MCF 10A (cell line): ENCODE measurements at regions of chr1 and their contacts with region 1.

Region 1: GRCh38 chr1:64923294-64923721 is 43.0 kb downstream of the JAK1 start:
- DNase-seq: no peak
- H3K4me3 Mint-ChIP-seq: no peak overlapping the region
- H3K27ac Mint-ChIP-seq: no peak overlapping the region
- H3K4me1 Mint-ChIP-seq: peaks cover 35% of the 10 kb centered on the region
- H3K27me3 Mint-ChIP-seq: no peaks in the 10 kb centered on the region
- CTCF ChIP-seq: no peak

Region 2: GRCh38 chr1:64909031-64909430 is 14.3 kb before region 1 on chr1:
- CTCF ChIA-PET with region 1: interaction called, 3 read pairs
- POLR2A ChIA-PET with region 1: interaction called, 18 read pairs
- intact Hi-C with region 1: no loop called
- DNase-seq: no peak
- H3K4me3 Mint-ChIP-seq: no peak overlapping the region
- H3K27ac Mint-ChIP-seq: no peak overlapping the region
- H3K4me1 Mint-ChIP-seq: peaks cover 48% of the 10 kb centered on the region
- H3K27me3 Mint-ChIP-seq: no peaks in the 10 kb centered on the region
- CTCF ChIP-seq: no peak